ENCODE measurements at regions of chr3 and their contacts with region 1.

Region 1: GRCh38 chr3:130892759-130893375 is 1.0 kb upstream of the ATP2C1 start:
- DNase-seq: peak in 33 of 35 experiments; percentile 23 to 86 (median 63)
- ATAC-seq: peak; percentile 55 to 64 (median 56)
- H3K4me3 ChIP-seq: peak overlapping the region; percentile 76 to 89
- H3K4me3 Mint-ChIP-seq: peak overlapping the region; percentile 94 to 96 (median 96)
- H3K27ac ChIP-seq: peak overlapping the region; percentile 94
- H3K27ac Mint-ChIP-seq: peak overlapping the region; percentile 98 to 100
- H3K4me1 ChIP-seq: peaks cover 11 to 14% of the 10 kb centered on the region in 2 experiments
- H3K4me1 Mint-ChIP-seq: peaks cover 33 to 39% (median 37%) of the 10 kb centered on the region in 3 donors
- H3K27me3 ChIP-seq: peaks cover 0 to 3% of the 10 kb centered on the region in 2 experiments
- H3K27me3 Mint-ChIP-seq: no peaks in the 10 kb centered on the region

Region 2: DNA sequence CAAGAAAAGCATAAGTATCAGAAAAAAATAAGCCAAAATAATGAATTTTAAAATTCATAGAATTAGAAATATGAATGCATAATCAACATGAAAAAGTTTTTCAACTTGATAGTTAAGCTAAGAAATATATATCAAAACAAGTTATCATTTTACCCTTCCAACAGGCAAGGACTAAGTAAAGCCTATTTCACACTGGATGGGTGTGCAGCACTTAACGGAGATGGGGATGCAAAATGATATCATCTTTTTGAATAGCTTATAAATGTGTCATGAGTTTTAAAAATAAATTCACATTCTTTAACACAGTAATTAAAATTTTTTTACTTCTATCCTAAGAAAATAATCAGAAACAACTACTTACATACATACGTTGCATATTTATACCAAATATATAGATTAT is 167.1 kb before region 1 on chr3:
- CTCF ChIA-PET with region 1: interaction called, 5 to 6 read pairs
- POLR2A ChIA-PET with region 1: interaction called in 1 of 2 experiments, 13 read pairs
- DNase-seq: no peak
- ATAC-seq: no peak
- H3K4me3 ChIP-seq: no peak overlapping the region
- H3K4me3 Mint-ChIP-seq: no peak overlapping the region
- H3K27ac ChIP-seq: no peak overlapping the region
- H3K27ac Mint-ChIP-seq: no peak overlapping the region
- H3K4me1 ChIP-seq: no peaks in the 10 kb centered on the region
- H3K4me1 Mint-ChIP-seq: peaks cover 0 to 6% (median 3%) of the 10 kb centered on the region in 3 donors
- H3K27me3 ChIP-seq: no peaks in the 10 kb centered on the region
- H3K27me3 Mint-ChIP-seq: no peaks in the 10 kb centered on the region

Region 3: DNA sequence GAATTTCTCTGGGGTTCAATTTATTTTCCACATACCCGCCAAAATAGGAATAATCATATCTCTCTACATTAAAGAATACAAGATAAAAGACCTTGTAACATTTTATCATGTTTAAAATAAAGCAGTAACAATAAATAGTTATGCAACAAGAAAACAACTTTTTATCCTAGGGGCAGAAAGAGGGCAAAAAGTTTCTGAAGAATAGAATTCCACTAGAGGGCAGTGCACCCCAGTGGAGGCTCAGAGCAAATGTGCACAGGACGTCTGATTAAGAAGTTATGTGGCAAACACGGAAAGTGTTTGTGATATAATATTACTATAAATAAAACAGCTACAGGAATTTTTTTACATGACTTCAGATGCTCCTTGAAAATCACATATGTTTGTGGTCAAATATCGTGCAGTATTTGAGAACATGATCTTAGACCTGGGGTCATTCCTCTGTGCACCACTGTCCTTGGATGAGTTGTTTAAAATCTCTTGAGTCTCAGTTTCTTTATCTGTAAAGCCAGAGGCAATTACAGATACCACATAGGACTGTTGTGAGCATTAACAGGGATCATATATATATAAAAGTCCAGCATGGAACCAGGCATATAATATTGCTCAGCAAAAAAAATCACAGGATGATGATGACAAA is 133.0 kb before region 1 on chr3:
- CTCF ChIA-PET with region 1: interaction called, 19 to 27 read pairs
- POLR2A ChIA-PET with region 1: interaction called in 1 of 2 experiments, 3 read pairs
- DNase-seq: peak in 31 of 35 experiments; percentile 12 to 73 (median 37)
- ATAC-seq: peak; percentile 57 to 81 (median 66)
- H3K4me3 ChIP-seq: no peak overlapping the region
- H3K4me3 Mint-ChIP-seq: no peak overlapping the region
- H3K27ac ChIP-seq: no peak overlapping the region
- H3K27ac Mint-ChIP-seq: no peak overlapping the region
- H3K4me1 ChIP-seq: no peaks in the 10 kb centered on the region
- H3K4me1 Mint-ChIP-seq: no peaks in the 10 kb centered on the region
- H3K27me3 ChIP-seq: peaks cover 0 to 12% of the 10 kb centered on the region in 2 experiments
- H3K27me3 Mint-ChIP-seq: peaks cover 13 to 20% of the 10 kb centered on the region in 2 donors

Region 4: GRCh38 chr3:130820976-130821375 is 71.9 kb before region 1 on chr3:
- CTCF ChIA-PET with region 1: no interaction called
- POLR2A ChIA-PET with region 1: no interaction called
- DNase-seq: no peak
- ATAC-seq: no peak
- H3K4me3 ChIP-seq: no peak overlapping the region
- H3K4me3 Mint-ChIP-seq: no peak overlapping the region
- H3K27ac ChIP-seq: no peak overlapping the region
- H3K27ac Mint-ChIP-seq: no peak overlapping the region
- H3K4me1 ChIP-seq: no peaks in the 10 kb centered on the region
- H3K4me1 Mint-ChIP-seq: no peaks in the 10 kb centered on the region
- H3K27me3 ChIP-seq: no peaks in the 10 kb centered on the region
- H3K27me3 Mint-ChIP-seq: peaks cover 5 to 7% of the 10 kb centered on the region in 2 donors

Region 5: DNA sequence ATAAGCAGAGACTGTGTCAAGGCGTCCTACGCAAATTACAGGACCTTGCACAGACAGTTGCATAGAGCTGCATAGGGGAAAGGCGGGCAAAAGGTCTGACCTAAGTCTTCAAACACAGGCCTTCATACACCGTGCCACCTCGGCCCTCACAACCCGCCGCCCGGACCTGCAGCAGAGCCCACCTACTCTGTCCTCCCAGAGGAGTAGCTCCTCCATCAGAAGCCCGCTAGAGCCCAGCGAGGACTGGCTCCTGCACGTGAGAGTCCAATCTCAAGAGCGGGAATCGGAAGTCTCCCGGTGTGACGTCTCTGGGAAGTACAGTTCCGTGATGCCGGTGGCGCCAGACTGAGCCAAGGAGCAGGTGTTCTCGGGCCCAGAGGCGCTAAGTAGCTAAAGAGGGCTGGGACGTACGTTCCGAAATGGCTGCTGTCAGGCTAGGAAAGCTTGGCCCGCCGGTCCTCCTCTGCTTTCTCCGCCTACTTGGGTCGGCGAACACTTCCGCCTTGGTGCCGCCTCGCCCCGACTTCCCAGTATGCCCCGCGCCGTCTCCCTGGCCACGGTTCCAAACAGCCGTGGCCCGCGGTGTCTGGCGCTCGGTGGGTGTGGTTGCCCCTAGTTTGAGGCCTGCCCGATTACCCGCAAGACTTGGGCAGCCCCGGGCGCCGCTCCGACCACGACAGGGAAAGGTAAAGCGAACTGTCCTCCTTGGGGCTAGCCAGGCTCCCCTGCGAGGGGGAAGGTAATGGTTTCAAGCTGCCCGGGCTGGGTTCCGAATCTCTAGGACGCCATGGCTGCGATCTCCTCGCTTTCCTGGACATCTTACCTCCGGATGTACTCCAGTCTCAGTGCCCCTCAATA is 133.7 kb after region 1 on chr3 and contains the starts of genes ASTE1 and NEK11:
- CTCF ChIA-PET with region 1: interaction called in 1 of 2 experiments, 21 read pairs
- POLR2A ChIA-PET with region 1: no interaction called
- DNase-seq: peak; percentile 75 to 95 (median 92)
- ATAC-seq: peak; percentile 98 to 99 (median 98)
- H3K4me3 ChIP-seq: peak within 1 kb of the TSS; percentile 81 to 98
- H3K4me3 Mint-ChIP-seq: peak within 1 kb of the TSS; percentile 89 to 93 (median 91)
- H3K27ac ChIP-seq: peak within 1 kb of the TSS; percentile 87
- H3K27ac Mint-ChIP-seq: peak within 1 kb of the TSS; percentile 92 to 98
- H3K4me1 ChIP-seq: peaks cover 22 to 25% of the 10 kb centered on the region in 2 experiments
- H3K4me1 Mint-ChIP-seq: peaks cover 50 to 55% (median 52%) of the 10 kb centered on the region in 3 donors
- H3K27me3 ChIP-seq: no peaks in the 10 kb centered on the region
- H3K27me3 Mint-ChIP-seq: no peaks in the 10 kb centered on the region
- total RNA-seq, gene ASTE1: 20.4 to 24.7 (median 22.5) TPM
- total RNA-seq, gene NEK11: 3.8 to 6.5 (median 4.5) TPM

Measured in T-cell (primary cell).